Ovary (tissue), 10 donors: ENCODE measurements at regions of chr13 and their contacts with region 1.

Region 1: GRCh38 chr13:100235311-100235901 is 146.5 kb downstream of the PCCA start:
- DNase-seq: no peak
- H3K4me3 ChIP-seq: no peak overlapping the region
- H3K27ac ChIP-seq: no peak overlapping the region
- H3K4me1 ChIP-seq: no peaks in the 10 kb centered on the region
- H3K27me3 ChIP-seq: no peaks in the 10 kb centered on the region
- CTCF ChIP-seq: peak; percentile 16 to 42 (median 23)
- EP300 ChIP-seq: no peak
- POLR2A ChIP-seq: no peak

Region 2: GRCh38 chr13:99656092-99656745 is 579.2 kb before region 1 on chr13:
- intact Hi-C with region 1: loop called in 2 of 4 experiments (anchors 10 kb)
- DNase-seq: peak; percentile 69 to 81 (median 75)
- H3K4me3 ChIP-seq: no peak overlapping the region
- H3K27ac ChIP-seq: no peak overlapping the region
- H3K4me1 ChIP-seq: no peaks in the 10 kb centered on the region
- H3K27me3 ChIP-seq: no peaks in the 10 kb centered on the region
- CTCF ChIP-seq: peak; percentile 67 to 77 (median 72)
- EP300 ChIP-seq: no peak
- POLR2A ChIP-seq: no peak

Region 3: GRCh38 chr13:99916366-99917103 is 318.9 kb before region 1 on chr13:
- intact Hi-C with region 1: loop called in 2 of 4 experiments (anchors 10 kb)
- DNase-seq: no peak
- H3K4me3 ChIP-seq: no peak overlapping the region
- H3K27ac ChIP-seq: no peak overlapping the region
- H3K4me1 ChIP-seq: no peaks in the 10 kb centered on the region
- H3K27me3 ChIP-seq: no peaks in the 10 kb centered on the region
- CTCF ChIP-seq: peak in 2 of 3 donors; percentile 28 to 46
- EP300 ChIP-seq: no peak
- POLR2A ChIP-seq: no peak

Region 4: DNA sequence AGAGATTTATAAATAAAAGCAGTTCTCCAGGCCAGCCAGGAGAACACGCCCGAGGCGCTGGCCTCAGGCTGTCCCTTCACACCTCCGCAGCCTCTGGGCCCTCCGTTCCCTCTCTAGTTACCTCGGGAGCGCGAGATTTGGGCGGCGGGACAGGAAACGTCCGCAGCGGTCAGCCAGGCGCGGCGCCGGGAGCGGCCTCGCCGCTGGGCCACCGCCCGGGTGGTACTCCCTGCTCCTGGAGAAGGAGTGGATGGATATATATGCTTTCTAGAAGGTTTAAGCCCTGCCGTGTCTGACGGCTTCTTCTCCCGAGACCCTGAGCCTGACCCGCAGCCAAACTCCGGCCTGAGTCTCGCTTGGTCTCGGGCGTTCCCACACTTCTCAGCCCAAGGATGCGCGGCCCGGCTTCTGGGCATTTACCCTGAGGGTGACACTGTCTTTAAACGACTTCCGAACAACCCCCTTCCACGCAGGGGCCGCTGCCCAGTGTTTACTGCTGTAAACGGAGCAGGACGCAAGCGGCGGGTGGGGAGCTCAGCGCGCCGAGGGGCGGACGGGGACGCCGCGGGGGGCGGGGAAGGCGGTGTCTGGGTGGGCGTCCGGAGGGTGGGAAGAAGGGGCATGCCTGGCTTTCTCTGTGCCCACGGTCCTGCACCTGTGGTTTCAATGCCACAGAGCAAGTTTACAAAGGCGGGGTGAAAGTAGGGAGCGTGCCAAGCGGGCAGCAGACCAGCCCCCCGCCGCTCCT is 255.8 kb before region 1 on chr13:
- intact Hi-C with region 1: loop called in 1 of 4 experiments (anchors 5 kb)
- DNase-seq: peak in 1 of 5 donors; percentile 20
- H3K4me3 ChIP-seq: peak overlapping the region; percentile 39
- H3K27ac ChIP-seq: no peak overlapping the region
- H3K4me1 ChIP-seq: peaks cover 13% of the 10 kb centered on the region
- H3K27me3 ChIP-seq: peaks cover 3% of the 10 kb centered on the region
- CTCF ChIP-seq: no peak
- EP300 ChIP-seq: no peak
- POLR2A ChIP-seq: no peak

Region 5: GRCh38 chr13:101751488-101751887 is 1516.1 kb after region 1 on chr13:
- intact Hi-C with region 1: no loop called
- DNase-seq: no peak
- H3K4me3 ChIP-seq: no peak overlapping the region
- H3K27ac ChIP-seq: no peak overlapping the region
- H3K4me1 ChIP-seq: no peaks in the 10 kb centered on the region
- H3K27me3 ChIP-seq: no peaks in the 10 kb centered on the region
- CTCF ChIP-seq: no peak
- EP300 ChIP-seq: no peak
- POLR2A ChIP-seq: no peak